PC-9 (cell line): ENCODE measurements at regions of chr1 and their contacts with region 1.

Region 1: DNA sequence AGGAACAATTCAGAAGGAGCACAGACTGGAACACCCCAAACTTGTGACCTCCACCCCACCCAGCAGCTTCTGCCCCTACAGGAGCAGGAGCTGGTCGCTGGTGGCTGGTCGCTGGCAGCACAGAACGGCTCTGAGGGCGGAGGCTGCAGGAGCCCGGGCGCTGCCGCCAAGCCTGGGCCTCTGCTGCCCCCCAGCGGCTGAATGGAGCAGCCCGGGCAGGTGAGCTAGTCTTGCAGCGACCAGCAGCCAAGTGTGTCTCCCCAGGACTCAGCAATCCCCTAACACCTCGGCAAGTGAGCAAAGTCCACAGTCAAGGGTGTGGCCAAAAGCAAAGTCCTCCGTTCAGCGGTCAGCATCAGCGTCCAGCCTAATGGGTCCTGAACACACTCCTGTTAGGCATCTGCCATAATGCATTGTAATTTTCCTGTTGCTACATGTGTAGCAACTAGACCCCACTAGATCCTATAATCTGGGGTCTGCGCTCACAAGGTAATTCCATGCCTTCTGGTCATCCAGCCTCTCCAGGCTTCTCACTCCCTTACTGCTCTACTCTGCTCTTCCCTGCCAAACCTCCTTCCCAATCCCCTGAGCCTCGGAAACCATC is 12.1 kb upstream of the GJB5 start:
- DNase-seq: peak; percentile 48 to 84
- H3K4me3 ChIP-seq: no peak overlapping the region
- H3K27ac ChIP-seq: no peak overlapping the region
- H3K4me1 ChIP-seq: no peaks in the 10 kb centered on the region
- H3K27me3 ChIP-seq: no peaks in the 10 kb centered on the region
- CTCF ChIP-seq: peak; percentile 92

Region 2: GRCh38 chr1:33633019-33633801 is 1109.6 kb before region 1 on chr1:
- CTCF ChIA-PET with region 1: interaction called, 3 read pairs
- POLR2A ChIA-PET with region 1: no interaction called
- intact Hi-C with region 1: loop called (anchors 1 kb)
- DNase-seq: peak; percentile 42 to 74
- H3K4me3 ChIP-seq: no peak overlapping the region
- H3K27ac ChIP-seq: no peak overlapping the region
- H3K4me1 ChIP-seq: no peaks in the 10 kb centered on the region
- H3K27me3 ChIP-seq: peaks cover 65% of the 10 kb centered on the region
- CTCF ChIP-seq: peak; percentile 78

Region 3: GRCh38 chr1:34460193-34460592 is 282.6 kb before region 1 on chr1:
- CTCF ChIA-PET with region 1: no interaction called
- POLR2A ChIA-PET with region 1: no interaction called
- intact Hi-C with region 1: loop called (anchors 2 kb)
- DNase-seq: peak in 1 of 2 experiments; percentile 9
- H3K4me3 ChIP-seq: no peak overlapping the region
- H3K27ac ChIP-seq: no peak overlapping the region
- H3K4me1 ChIP-seq: no peaks in the 10 kb centered on the region
- H3K27me3 ChIP-seq: peaks cover 41% of the 10 kb centered on the region
- CTCF ChIP-seq: peak; percentile 70

Region 4: GRCh38 chr1:34754964-34755637 is 12.3 kb after region 1 on chr1 and contains the start of gene GJB5:
- CTCF ChIA-PET with region 1: interaction called, 6 read pairs
- POLR2A ChIA-PET with region 1: interaction called, 13 read pairs
- intact Hi-C with region 1: no loop called
- DNase-seq: peak; percentile 83 to 87
- H3K4me3 ChIP-seq: peak within 1 kb of the TSS; percentile 52
- H3K27ac ChIP-seq: peak within 1 kb of the TSS; percentile 81
- H3K4me1 ChIP-seq: peaks cover 47% of the 10 kb centered on the region
- H3K27me3 ChIP-seq: no peaks in the 10 kb centered on the region
- CTCF ChIP-seq: no peak
- total RNA-seq, gene GJB5: 18.1 and 20.0 TPM in 2 replicates